Heart left ventricle (tissue), 16 donors: ENCODE measurements at regions of chr2 and their contacts with region 1.

Region 1: DNA sequence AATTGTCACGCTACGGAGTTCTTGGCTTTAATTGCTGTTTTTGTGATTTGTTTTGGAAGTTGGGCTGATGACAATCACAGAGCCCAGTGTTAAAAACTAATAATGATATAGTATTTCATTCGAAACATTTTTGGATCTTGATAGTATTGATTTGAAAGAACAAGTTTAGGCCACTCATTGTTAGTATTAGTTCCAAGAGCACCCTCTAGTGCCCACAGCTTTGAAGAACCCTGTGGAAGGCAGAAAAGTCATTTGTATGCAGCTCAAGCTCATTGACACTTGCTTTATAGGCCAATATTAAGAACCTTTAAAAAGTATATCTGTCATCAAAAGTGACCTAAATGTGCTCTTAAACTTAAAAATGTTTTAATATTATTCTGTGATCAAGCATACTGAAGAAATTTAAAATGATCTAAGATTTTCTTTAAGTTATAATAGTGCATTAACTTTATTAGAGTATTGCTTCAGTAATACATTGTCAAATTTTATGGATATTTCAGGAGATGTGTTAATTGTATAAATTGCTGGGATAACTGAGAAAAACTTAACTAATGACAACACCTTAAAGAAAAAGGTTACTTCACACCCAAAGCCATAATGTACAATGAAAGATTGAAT is 191.0 kb downstream of the GRB14 start:
- DNase-seq: no peak
- ATAC-seq: no peak
- H3K4me3 ChIP-seq: no peak overlapping the region
- H3K27ac ChIP-seq: no peak overlapping the region
- H3K4me1 ChIP-seq: no peaks in the 10 kb centered on the region
- H3K27me3 ChIP-seq: peaks cover 0 to 6% (median 0%) of the 10 kb centered on the region in 9 donors
- CTCF ChIP-seq: peak; percentile 38 to 70 (median 53)
- POLR2A ChIP-seq: no peak

Region 2: DNA sequence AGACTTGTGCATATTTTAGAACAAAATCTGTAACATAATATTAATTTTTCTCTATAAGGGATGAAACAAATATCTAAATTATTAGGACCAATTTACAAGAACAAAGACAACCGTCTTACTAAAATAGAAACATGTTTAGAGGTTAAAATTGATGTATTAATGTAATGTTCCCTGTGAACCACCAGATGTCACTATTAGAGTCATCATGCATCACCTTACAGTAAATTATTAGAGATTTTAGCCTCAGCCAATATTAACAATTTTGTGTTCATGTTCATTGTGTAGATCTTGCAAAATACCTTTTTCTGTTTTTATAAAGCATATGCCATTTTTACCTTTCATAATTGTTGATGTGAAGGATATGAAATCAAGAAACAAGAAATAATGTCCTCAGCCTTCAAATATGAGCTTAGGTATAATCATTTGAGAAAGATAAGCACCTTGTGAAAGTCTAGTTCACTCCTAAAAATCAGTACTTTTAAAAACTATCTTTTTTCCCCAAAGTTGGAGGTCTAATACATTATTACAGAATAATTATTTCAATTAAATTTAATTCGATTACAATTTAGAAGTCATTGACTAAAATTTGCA is 1247.4 kb before region 1 on chr2:
- intact Hi-C with region 1: loop called in 5 of 10 experiments (anchors 5 kb)
- DNase-seq: no peak
- ATAC-seq: no peak
- H3K4me3 ChIP-seq: no peak overlapping the region
- H3K27ac ChIP-seq: no peak overlapping the region
- H3K4me1 ChIP-seq: no peaks in the 10 kb centered on the region
- H3K27me3 ChIP-seq: peaks cover 0 to 9% (median 0%) of the 10 kb centered on the region in 9 donors
- CTCF ChIP-seq: peak; percentile 30 to 68 (median 56)
- POLR2A ChIP-seq: no peak

Region 3: DNA sequence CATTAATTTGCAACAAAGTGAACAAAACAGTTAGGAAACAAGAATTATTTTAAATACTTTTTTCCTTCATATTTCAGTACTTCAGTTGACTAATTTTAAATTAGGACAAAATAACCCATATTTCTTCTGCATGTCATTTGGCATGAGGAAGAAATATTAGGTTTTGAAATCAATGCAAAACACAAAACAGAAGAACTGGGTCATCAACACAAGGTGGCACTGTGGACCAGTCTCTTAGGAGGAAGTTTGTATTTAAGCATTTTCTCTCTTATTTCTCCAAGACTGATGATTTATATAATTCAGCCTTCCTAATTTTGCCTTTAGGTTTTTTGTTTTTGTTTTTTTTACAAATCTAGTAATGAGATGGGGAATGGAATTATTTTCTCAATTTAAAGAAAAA is 1238.9 kb before region 1 on chr2:
- intact Hi-C with region 1: loop called in 5 of 10 experiments (anchors 2 to 5 kb)
- DNase-seq: no peak
- ATAC-seq: no peak
- H3K4me3 ChIP-seq: no peak overlapping the region
- H3K27ac ChIP-seq: no peak overlapping the region
- H3K4me1 ChIP-seq: no peaks in the 10 kb centered on the region
- H3K27me3 ChIP-seq: no peaks in the 10 kb centered on the region
- CTCF ChIP-seq: peak; percentile 36 to 69 (median 52)
- POLR2A ChIP-seq: no peak

Region 4: DNA sequence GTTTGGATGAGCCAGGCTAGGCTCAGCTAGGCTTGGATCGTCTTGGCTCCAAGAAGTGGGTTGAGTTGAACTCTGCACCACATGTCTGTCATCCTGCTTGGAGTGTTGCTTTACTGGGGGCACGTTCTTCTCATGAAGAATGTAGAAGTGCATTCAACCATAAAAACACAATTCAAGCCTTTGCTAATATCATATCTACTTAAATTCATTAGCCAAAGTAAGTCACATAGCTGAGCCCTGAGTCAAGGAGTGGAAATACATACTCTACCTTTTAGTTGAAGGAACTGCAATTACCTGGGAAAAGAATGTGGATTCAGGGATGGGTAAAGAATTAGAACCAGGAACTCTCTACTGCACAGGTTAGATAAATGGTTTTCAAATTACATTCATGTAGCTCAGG is 1231.3 kb before region 1 on chr2:
- intact Hi-C with region 1: loop called in 3 of 10 experiments (anchors 5 kb)
- DNase-seq: no peak
- ATAC-seq: no peak
- H3K4me3 ChIP-seq: no peak overlapping the region
- H3K27ac ChIP-seq: no peak overlapping the region
- H3K4me1 ChIP-seq: no peaks in the 10 kb centered on the region
- H3K27me3 ChIP-seq: no peaks in the 10 kb centered on the region
- CTCF ChIP-seq: no peak
- POLR2A ChIP-seq: no peak

Region 5: GRCh38 chr2:164523009-164523408 is 92.7 kb after region 1 on chr2:
- intact Hi-C with region 1: no loop called
- DNase-seq: no peak
- ATAC-seq: no peak
- H3K4me3 ChIP-seq: no peak overlapping the region
- H3K27ac ChIP-seq: no peak overlapping the region
- H3K4me1 ChIP-seq: peaks cover 0 to 4% (median 0%) of the 10 kb centered on the region in 12 donors
- H3K27me3 ChIP-seq: no peaks in the 10 kb centered on the region
- CTCF ChIP-seq: no peak
- POLR2A ChIP-seq: no peak

Region 6: GRCh38 chr2:164717000-164717803 is 286.9 kb after region 1 on chr2:
- intact Hi-C with region 1: no loop called
- DNase-seq: no peak
- ATAC-seq: no peak
- H3K4me3 ChIP-seq: no peak overlapping the region
- H3K27ac ChIP-seq: no peak overlapping the region
- H3K4me1 ChIP-seq: peaks cover 0 to 20% (median 3%) of the 10 kb centered on the region in 12 donors
- H3K27me3 ChIP-seq: no peaks in the 10 kb centered on the region
- CTCF ChIP-seq: peak; percentile 43 to 72 (median 62)
- POLR2A ChIP-seq: no peak